AG04449 (cell line): ENCODE measurements at regions of chr1 and their contacts with region 1.

Region 1: DNA sequence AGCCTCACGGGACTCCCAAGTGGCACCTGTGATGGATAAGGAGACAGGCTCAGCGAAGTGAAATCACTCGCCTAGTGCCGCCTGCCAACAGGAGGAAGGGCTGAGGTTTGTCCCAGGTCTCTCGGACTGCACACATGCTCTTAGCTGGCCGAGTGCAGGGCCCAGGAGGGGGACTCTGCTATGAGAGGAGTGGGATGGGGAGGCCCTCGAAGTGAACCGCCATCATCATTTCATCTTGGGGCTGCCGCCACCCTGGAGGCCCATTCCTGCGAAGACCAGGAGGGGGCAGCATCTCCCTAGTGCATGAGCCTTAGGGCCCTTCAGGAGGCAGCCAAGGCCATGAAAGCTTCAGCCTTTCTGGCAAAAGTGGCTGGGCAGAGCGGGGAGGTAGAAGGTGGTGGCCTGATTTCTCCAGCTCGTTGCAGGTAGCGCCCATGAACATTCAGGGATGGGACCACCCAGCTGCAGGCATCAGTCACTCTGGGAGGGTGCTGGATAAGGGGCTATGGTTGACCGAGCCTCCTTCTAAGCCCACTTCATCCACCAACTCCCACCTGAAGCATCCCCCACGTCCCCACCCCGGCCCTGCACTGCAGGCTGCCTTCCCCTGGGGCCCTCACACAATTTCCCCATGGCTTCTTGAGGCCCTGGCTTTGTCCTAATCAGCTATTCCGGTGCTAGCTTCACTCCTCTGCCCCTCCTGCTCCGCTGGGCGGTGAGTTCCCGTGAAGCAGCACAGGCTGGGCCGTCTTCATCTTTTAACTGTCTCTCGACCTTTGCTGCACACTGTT is 17.2 kb upstream of the RASSF5 start:
- DNase-seq: no peak
- H3K4me3 ChIP-seq: no peak overlapping the region
- CTCF ChIP-seq: peak; percentile 98

Region 2: GRCh38 chr1:206469933-206470691 is 20.1 kb before region 1 on chr1 and contains the start of gene IKBKE:
- CTCF ChIA-PET with region 1: interaction called, 24 read pairs
- POLR2A ChIA-PET with region 1: no interaction called
- DNase-seq: no peak
- H3K4me3 ChIP-seq: peak within 1 kb of the TSS; percentile 93
- CTCF ChIP-seq: peak; percentile 54

Region 3: GRCh38 chr1:206544562-206545257 is 54.5 kb after region 1 on chr1:
- CTCF ChIA-PET with region 1: interaction called, 53 read pairs
- POLR2A ChIA-PET with region 1: no interaction called
- DNase-seq: no peak
- H3K4me3 ChIP-seq: no peak overlapping the region
- CTCF ChIP-seq: peak; percentile 88

Region 4: GRCh38 chr1:206590025-206590758 is 100.0 kb after region 1 on chr1:
- CTCF ChIA-PET with region 1: interaction called, 568 read pairs
- POLR2A ChIA-PET with region 1: no interaction called
- DNase-seq: peak; percentile 41
- H3K4me3 ChIP-seq: no peak overlapping the region
- CTCF ChIP-seq: no peak

Region 5: DNA sequence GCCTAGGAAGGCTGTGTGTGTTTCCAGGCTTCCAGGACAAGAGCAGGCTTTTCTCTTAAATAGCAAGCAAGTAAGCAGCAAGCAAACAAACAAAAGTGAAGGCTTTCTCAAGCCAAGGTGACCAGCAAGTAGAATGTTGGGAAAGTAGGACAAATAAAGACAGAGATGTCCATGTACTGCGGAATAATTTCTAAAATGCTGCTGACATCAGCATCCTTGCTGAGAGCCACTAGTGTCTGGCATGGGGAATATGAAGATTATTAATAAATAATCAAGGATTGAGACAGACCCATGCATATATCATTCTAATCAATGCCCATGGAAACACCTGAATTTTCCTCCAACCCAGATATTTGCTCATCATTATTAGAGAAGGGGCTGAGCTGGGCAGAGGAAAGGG is 138.7 kb after region 1 on chr1:
- CTCF ChIA-PET with region 1: interaction called, 32 read pairs
- POLR2A ChIA-PET with region 1: no interaction called
- DNase-seq: no peak
- H3K4me3 ChIP-seq: no peak overlapping the region
- CTCF ChIP-seq: no peak

Region 6: DNA sequence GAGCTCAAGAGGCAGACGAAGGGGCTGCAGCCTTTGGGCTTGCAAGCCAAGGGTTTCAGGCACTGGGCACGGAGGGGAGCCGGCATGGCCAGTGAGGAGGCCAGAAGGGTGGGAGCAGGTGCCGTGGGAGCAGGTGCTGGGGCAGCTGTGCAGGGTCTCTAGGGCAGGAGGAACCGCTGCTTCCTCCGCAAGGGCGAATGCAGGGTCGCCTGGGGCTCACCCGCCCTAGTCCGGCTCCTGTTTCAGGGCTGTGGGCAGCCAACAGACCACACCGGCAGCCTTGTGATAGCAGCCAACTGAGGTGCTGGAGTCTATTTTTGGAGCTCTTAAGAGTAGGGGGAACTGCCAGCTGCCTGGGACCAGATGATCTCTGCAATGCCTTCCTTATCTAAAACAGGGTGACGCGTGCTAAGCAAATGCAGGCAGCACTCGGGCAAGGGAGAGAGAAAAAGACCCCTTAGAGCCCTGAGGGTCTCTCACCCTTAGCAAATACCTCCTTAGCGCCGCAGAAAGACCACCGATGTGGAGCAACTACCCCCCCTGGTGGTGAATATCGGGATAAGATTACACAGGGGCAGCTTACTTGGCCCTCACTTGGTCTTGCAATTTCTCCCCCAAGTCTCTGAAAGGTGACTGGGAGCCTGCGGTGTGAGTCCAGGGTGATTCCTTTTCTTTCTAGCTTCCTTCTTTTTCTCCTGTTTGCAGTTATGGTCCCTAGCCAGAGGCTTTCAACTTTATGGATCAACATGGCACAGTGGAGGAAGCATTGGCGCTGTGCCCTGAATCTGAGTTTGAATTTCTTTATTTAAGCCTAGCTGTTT is 173.9 kb after region 1 on chr1:
- CTCF ChIA-PET with region 1: interaction called, 107 read pairs
- POLR2A ChIA-PET with region 1: no interaction called
- DNase-seq: no peak
- H3K4me3 ChIP-seq: no peak overlapping the region; the same call in 1 of the 2 replicates
- CTCF ChIP-seq: peak; percentile 66

Region 7: DNA sequence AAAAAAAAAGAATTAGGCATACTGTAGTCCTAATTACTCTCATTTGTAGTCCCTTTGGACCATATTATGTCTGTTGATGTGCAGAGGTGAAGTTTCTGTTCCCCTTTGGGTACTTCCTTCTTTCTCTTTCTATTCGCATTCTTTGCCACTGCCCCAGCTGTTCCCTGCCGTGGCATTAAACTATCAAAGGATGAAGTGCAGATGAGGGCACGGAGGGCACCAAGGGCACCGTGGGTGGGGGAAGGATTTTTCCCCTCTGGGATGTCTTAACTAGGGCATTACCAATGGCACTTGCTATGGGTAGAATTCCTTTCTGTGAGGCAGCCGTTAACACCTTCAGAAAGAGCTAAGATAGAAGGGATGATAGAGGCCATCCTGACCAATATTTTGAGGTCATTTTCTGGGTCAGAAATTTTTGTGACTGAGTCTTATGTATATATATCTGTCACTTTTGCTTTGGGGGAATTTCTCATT is 189.6 kb after region 1 on chr1:
- CTCF ChIA-PET with region 1: no interaction called
- POLR2A ChIA-PET with region 1: no interaction called
- DNase-seq: no peak
- H3K4me3 ChIP-seq: no peak overlapping the region
- CTCF ChIP-seq: no peak

Region 8: GRCh38 chr1:206693029-206693428 is 202.9 kb after region 1 on chr1:
- CTCF ChIA-PET with region 1: no interaction called
- POLR2A ChIA-PET with region 1: no interaction called
- DNase-seq: no peak
- H3K4me3 ChIP-seq: peak overlapping the region; percentile 6; the same call in 1 of the 2 replicates
- CTCF ChIP-seq: no peak